ENCODE measurements at regions of chr7 and their contacts with region 1.

Region 1: GRCh38 chr7:47227762-47228177 is 354.1 kb downstream of the TNS3 start:
- DNase-seq: peak; percentile 51 to 85 (median 70)
- ATAC-seq: peak; percentile 82
- H3K4me3 ChIP-seq: no peak overlapping the region
- H3K27ac ChIP-seq: peak overlapping the region; percentile 59
- H3K4me1 ChIP-seq: peaks cover 17 to 31% of the 10 kb centered on the region in 2 experiments
- H3K27me3 ChIP-seq: no peaks in the 10 kb centered on the region
- CTCF ChIP-seq: no peak
- EP300 ChIP-seq: peak; percentile 39; the same call in 1 of the 2 replicates
- POLR2A ChIP-seq: no peak
- RAD21 ChIP-seq: 0 out of 4 replicates have a peak, but pooled peaks of 1 of the 2 experiments have one; percentile 15

Region 2: DNA sequence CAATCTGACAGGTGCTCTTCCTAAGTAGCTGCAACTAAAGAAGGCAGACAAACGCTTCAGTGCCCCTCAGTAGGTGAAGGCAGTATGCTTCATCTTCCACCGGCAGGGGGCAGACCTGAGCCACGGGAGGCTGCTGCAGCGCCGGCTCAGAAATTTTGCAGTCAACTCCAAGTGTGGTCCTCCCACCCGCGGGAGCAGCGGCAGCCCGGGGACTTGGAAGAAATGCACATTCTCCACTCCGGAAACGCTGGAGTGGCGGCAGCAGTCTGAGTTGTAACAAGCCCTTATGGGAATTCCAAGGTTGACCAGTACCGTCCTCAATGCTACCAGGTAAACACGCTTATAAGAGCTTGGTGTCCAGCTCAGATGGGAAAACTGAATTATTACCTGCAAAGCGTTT is 1310.1 kb before region 1 on chr7:
- CTCF ChIA-PET with region 1: interaction called, 3 read pairs
- POLR2A ChIA-PET with region 1: no interaction called
- in situ Hi-C with region 1: no loop called
- intact Hi-C with region 1: loop called (anchors 1 kb)
- DNase-seq: peak; percentile 70 to 82 (median 76)
- ATAC-seq: peak; percentile 95
- H3K4me3 ChIP-seq: no peak overlapping the region
- H3K27ac ChIP-seq: no peak overlapping the region
- H3K4me1 ChIP-seq: no peaks in the 10 kb centered on the region
- H3K27me3 ChIP-seq: peaks cover 0 to 4% of the 10 kb centered on the region in 2 experiments; a peak in 2 of 5 replicates
- CTCF ChIP-seq: peak; percentile 76 to 90 (median 80)
- EP300 ChIP-seq: no peak
- POLR2A ChIP-seq: no peak
- RAD21 ChIP-seq: peak; percentile 72 to 73

Region 3: GRCh38 chr7:46725838-46726237 is 501.9 kb before region 1 on chr7:
- CTCF ChIA-PET with region 1: no interaction called
- POLR2A ChIA-PET with region 1: no interaction called
- in situ Hi-C with region 1: no loop called
- intact Hi-C with region 1: no loop called
- DNase-seq: no peak
- ATAC-seq: no peak
- H3K4me3 ChIP-seq: no peak overlapping the region
- H3K27ac ChIP-seq: no peak overlapping the region
- H3K4me1 ChIP-seq: no peaks in the 10 kb centered on the region
- H3K27me3 ChIP-seq: no peaks in the 10 kb centered on the region
- CTCF ChIP-seq: no peak
- EP300 ChIP-seq: no peak
- POLR2A ChIP-seq: no peak
- RAD21 ChIP-seq: no peak

Measured in K562 (cell line).